ENCODE measurements at regions of chr16 and their contacts with region 1.

Region 1: DNA sequence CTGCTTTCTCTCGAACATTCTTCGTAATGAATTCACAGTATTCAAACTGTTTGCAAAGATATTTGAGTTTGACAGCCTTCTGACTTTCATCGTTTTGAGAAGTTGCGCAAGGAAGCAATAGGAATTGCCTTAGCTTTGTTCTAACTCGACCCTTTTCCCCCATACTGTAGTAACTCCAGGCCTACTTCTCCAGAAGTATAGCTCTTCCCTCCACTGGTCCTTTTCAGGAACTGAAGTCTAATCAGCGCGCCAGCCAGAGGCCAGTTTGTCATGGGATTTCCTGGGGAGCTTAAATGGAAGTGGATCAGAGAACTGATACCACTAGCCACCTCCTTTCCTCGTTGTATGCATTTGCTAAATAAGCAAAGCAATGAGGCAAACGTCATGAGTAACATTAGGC is 27.9 kb downstream of the CDR2 start:
- DNase-seq: no peak
- H3K4me3 ChIP-seq: no peak overlapping the region
- H3K27ac ChIP-seq: no peak overlapping the region
- H3K4me1 ChIP-seq: no peaks in the 10 kb centered on the region
- H3K27me3 ChIP-seq: no peaks in the 10 kb centered on the region
- CTCF ChIP-seq: no peak

Region 2: GRCh38 chr16:21565861-21566669 is 780.4 kb before region 1 on chr16:
- CTCF ChIA-PET with region 1: no interaction called
- POLR2A ChIA-PET with region 1: no interaction called
- intact Hi-C with region 1: loop called (anchors 10 kb)
- DNase-seq: no peak
- H3K4me3 ChIP-seq: no peak overlapping the region
- H3K27ac ChIP-seq: no peak overlapping the region
- H3K4me1 ChIP-seq: peaks cover 8% of the 10 kb centered on the region; the same call in 1 of the 2 replicates
- H3K27me3 ChIP-seq: no peaks in the 10 kb centered on the region
- CTCF ChIP-seq: no peak

Region 3: GRCh38 chr16:22358000-22358399 is 11.5 kb after region 1 on chr16:
- CTCF ChIA-PET with region 1: no interaction called
- POLR2A ChIA-PET with region 1: no interaction called
- intact Hi-C with region 1: no loop called
- DNase-seq: no peak
- H3K4me3 ChIP-seq: no peak overlapping the region
- H3K27ac ChIP-seq: no peak overlapping the region
- H3K4me1 ChIP-seq: peaks cover 12% of the 10 kb centered on the region
- H3K27me3 ChIP-seq: no peaks in the 10 kb centered on the region
- CTCF ChIP-seq: no peak